ENCODE measurements at regions of chr6 and their contacts with region 1.

Region 1: DNA sequence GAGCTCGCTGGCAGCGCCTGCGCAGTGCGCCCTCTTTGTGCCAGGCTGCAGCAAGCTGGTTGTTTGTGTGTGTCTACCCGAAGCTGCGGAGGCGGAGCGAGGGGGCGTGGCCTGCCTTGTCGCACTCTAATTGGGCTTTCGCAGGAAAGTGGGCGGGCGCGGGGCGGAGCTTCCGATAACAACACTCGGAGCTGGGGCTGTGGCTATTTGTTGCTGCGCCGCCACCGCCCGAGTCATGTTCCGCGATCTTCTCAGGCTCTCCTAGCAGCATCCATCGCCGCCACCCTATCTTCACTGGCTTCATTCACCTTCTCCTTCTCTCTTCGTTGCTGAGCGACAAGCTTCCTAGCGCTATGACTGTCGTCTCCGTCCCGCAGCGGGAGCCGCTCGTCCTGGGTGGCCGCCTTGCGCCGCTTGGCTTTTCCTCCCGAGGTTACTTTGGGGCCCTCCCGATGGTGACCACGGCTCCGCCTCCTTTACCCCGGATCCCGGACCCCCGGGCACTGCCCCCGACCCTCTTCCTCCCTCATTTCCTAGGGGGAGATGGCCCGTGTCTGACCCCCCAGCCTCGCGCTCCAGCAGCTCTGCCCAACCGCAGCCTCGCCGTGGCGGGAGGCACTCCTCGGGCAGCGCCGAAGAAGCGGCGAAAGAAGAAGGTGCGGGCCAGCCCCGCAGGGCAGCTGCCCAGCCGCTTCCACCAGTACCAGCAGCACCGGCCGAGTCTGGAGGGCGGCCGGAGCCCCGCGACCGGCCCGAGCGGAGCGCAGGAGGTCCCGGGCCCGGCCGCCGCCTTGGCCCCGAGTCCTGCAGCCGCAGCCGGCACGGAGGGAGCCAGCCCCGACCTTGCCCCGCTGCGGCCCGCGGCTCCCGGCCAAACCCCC is at the start of gene PNRC1:
- DNase-seq: peak; percentile 100
- H3K4me3 ChIP-seq: peak within 1 kb of the TSS; percentile 47 to 100 (median 96)
- H3K27ac ChIP-seq: peak within 1 kb of the TSS; percentile 90 to 100 (median 100)
- H3K27me3 ChIP-seq: no peaks in the 10 kb centered on the region
- CTCF ChIP-seq: peak in 19 of 56 donors; percentile 0 to 43 (median 17)
- total RNA-seq, gene PNRC1: 135 to 273 (median 176) TPM

Region 2: GRCh38 chr6:87701676-87702588 is 1378.8 kb before region 1 on chr6 and contains the start of gene AKIRIN2:
- intact Hi-C with region 1: loop called in 1 of 2 experiments (anchors 5 kb)
- DNase-seq: peak; percentile 93 to 97 (median 96)
- H3K4me3 ChIP-seq: peak within 1 kb of the TSS; percentile 61 to 98 (median 93)
- H3K27ac ChIP-seq: peak within 1 kb of the TSS; percentile 79 to 100 (median 98)
- H3K27me3 ChIP-seq: no peaks in the 10 kb centered on the region
- CTCF ChIP-seq: peak in 9 of 56 donors; percentile 3 to 41 (median 13)
- total RNA-seq, gene AKIRIN2: 38.8 to 78.6 (median 58.0) TPM

Region 3: DNA sequence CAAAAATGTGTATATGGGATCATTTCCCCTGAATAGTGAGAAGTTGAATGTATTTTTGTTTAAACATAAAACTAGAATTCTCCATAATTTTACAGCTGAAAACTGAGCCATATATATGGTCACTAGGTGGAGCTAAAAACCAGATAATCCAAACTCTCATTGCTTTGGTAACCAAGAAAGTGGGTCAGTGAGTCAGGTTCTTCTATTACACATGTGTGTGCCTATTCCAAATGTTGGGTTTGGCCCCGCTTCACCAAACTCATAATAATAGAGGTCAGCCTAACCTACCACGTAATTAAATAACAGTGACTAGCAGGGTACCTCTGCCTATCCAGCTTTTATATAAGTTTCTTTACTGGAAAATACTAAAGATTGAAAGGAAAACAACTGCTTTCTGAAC is 98.1 kb before region 1 on chr6:
- intact Hi-C with region 1: loop called (anchors 1 to 2 kb)
- DNase-seq: peak in 1 of 10 donors; percentile 26
- H3K4me3 ChIP-seq: peak overlapping the region in 30 of 59 donors; percentile 2 to 47 (median 23)
- H3K27ac ChIP-seq: peak overlapping the region in 1 of 59 donors; percentile 40
- H3K27me3 ChIP-seq: no peaks in the 10 kb centered on the region
- CTCF ChIP-seq: peak; percentile 66 to 95 (median 82)

Region 4: GRCh38 chr6:89117211-89118108 is 36.7 kb after region 1 on chr6 and contains the start of gene SRSF12:
- intact Hi-C with region 1: loop called (anchors 5 kb)
- DNase-seq: peak in 5 of 10 donors; percentile 22 to 55 (median 41)
- H3K4me3 ChIP-seq: peak within 1 kb of the TSS; percentile 62 to 88 (median 76)
- H3K27ac ChIP-seq: peak within 1 kb of the TSS in 37 of 59 donors; percentile 10 to 89 (median 60)
- H3K27me3 ChIP-seq: no peaks in the 10 kb centered on the region
- CTCF ChIP-seq: peak in 1 of 56 donors; percentile 13
- total RNA-seq, gene SRSF12: 5.9 to 23.4 (median 13.3) TPM

Region 5: DNA sequence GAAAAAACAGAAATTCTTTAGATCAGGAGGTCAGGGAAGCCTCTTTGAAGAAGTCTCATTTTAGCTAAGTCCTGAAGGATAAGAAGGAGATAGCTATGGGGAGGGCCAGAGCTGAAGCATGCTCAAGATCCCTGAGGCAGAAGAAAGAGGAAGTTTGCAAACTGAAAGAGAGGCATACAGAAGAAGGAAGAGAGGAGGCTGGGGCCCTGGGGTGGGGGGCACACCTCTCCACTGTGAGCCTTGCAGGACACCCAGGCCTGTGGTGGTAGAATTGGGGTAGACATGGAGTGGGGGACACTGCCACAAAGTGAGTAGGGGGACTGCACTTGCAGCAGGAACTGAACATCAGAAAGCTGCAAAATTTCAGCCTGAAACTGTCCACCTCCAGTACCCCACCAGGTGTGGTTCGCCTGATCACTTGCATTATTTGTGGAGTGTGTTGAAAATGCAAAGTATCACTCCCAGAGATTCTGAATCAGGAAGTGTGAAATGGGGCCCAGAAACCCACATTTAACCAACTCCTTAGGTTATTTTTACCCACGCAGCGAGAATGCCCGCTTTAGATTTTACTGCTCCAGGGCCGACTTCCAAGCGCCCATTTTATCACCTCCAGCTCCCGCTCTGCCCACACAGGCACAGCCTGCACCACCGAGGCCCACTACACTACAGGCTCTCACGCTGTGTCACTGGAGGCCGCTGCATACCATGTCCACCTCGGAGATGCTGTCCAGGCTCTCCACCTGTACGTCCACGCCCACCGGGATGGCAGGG is 190.4 kb after region 1 on chr6:
- intact Hi-C with region 1: no loop called
- DNase-seq: peak in 8 of 10 donors; percentile 4 to 73 (median 57)
- H3K4me3 ChIP-seq: no peak overlapping the region
- H3K27ac ChIP-seq: no peak overlapping the region
- H3K27me3 ChIP-seq: no peaks in the 10 kb centered on the region
- CTCF ChIP-seq: no peak

Region 6: DNA sequence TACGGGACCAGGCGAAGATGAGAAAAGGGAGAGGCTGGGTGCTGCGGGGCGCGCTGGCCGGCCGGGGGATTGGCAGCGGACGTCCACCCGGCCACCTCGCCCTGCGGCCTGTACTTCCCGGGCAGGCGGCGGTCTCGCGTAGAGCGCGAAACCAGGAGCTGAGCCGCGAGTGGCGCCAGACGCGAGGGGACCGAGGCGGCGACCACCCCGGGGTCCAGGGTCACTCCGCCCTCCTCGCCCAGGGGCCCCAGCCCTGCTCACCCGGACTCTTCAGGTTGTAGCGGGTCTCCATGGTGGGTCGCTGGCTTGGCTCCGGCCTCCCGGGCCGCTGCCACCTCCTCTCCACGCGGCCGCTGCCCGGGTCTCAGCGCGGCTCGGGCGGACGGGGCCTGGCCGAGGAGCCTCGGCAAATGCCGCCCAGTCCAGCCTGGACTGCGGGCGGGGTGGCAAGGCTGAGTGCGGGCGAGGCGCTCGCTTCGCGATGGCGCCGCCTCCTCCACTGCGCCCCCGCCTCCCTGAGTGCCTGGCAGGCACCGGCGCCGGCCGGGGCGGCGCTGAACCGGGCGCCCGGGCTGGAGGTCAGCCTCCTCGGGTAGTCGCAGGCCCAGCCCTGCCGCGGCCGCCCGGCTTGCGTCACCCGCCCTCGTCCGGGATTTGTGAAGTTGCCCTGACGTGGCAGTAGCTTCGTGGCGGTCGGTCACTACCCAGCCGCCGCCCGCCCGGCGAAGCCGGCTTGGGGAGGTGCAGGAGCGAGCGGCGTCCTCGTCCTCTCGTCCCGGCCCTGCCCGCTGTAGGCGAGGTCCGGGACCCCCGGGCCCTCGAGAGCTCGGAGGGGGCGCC is 271.7 kb after region 1 on chr6 and contains the start of gene UBE2J1:
- intact Hi-C with region 1: loop called (anchors 5 kb)
- DNase-seq: peak; percentile 74 to 92 (median 86)
- H3K4me3 ChIP-seq: peak within 1 kb of the TSS; percentile 75 to 99 (median 92)
- H3K27ac ChIP-seq: peak within 1 kb of the TSS; percentile 85 to 99 (median 96)
- H3K27me3 ChIP-seq: no peaks in the 10 kb centered on the region
- CTCF ChIP-seq: peak in 22 of 56 donors; percentile 1 to 63 (median 29)
- total RNA-seq, gene UBE2J1: 16.6 to 28.5 (median 23.0) TPM